ENCODE measurements at regions of chr18 and their contacts with region 1.

Region 1: GRCh38 chr18:13716916-13717315 is 9.4 kb downstream of the FAM210A start:
- DNase-seq: no peak

Region 2: GRCh38 chr18:13207294-13207693 is 509.6 kb before region 1 on chr18:
- intact Hi-C with region 1: loop called in 1 of 2 experiments (anchors 5 kb)
- DNase-seq: no peak

Region 3: GRCh38 chr18:13649397-13650390 is 67.2 kb before region 1 on chr18:
- intact Hi-C with region 1: no loop called
- DNase-seq: no peak

Region 4: DNA sequence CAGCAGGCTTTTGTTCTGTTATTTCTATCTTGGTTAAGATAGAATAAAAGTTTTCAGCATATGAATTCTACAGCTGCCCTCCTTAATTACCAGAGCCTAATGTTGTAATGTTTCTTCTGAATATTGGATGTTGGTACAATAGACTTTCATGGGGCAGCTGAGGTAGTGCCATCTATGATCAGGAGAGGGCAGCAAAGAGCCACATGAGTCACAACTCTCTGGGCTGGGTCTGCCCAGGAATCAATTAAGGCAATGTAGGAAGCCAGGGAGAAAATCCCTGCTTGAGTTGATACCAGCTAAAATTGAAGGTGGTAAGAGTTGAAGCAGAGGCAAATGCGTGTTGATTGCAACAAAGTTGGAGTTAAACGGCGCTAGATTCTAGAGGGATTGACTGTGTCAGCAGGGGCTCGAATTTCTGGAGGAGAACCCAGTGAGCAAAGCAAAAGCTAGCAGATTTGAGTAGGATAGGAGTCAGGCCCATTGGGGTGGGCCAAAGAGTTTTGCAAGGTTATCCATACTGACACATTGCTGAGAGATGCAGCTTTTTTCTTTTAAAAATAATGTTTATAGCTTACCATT is 96.4 kb after region 1 on chr18:
- intact Hi-C with region 1: no loop called
- DNase-seq: no peak

Measured in posterior vena cava (tissue), 2 donors.